ENCODE measurements at regions of chr15 and their contacts with region 1.

Region 1: DNA sequence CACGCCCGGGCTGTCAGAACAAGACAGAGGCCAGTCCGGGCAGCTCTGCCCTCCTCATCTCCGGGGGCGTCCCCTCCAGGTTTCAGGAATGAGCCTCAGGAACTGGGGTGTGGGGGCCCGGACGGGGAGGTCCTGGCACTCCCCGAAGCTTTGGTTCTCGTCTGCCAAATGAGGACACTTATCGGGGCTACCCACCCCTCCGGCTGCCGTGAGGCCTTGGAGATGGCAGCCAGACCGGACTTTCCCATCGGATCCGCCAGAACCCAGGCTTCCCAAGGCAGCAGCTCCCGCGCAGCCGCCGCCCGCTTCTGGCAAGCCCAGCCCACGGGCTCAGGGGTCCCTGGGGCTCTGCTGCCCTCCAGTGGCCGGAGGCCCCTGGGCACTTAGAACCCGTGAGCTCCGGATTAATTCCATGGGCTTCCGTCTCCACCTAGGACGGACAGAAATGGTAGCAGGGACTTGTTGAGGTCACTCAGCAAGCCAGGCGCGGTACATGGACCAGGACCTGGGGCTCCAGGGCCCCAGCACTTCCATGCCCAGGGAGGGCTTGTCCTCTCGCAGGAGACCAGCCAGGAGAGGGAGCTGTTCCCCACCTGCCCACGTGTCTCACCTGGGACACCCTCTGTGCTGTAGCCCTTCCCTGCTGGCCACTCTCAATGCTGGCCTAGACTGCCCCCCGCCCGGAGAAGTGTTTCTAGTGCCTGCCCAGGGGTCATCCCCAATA is 89.4 kb downstream of the LINGO1 start:
- DNase-seq: peak; percentile 87
- H3K4me3 ChIP-seq: peak overlapping the region; percentile 30 to 58 (median 46)
- H3K27ac ChIP-seq: peak overlapping the region; percentile 19 to 42 (median 34)
- H3K4me1 ChIP-seq: peaks cover 6 to 22% (median 10%) of the 10 kb centered on the region in 4 donors
- H3K27me3 ChIP-seq: no peaks in the 10 kb centered on the region
- CTCF ChIP-seq: peak; percentile 96 to 99 (median 97)
- EP300 ChIP-seq: no peak
- POLR2A ChIP-seq: no peak

Region 2: GRCh38 chr15:77024271-77025082 is 518.8 kb before region 1 on chr15:
- in situ Hi-C with region 1: no loop called
- intact Hi-C with region 1: loop called (anchors 2 kb)
- DNase-seq: peak; percentile 72
- H3K4me3 ChIP-seq: no peak overlapping the region
- H3K27ac ChIP-seq: no peak overlapping the region
- H3K4me1 ChIP-seq: peaks cover 0 to 15% (median 14%) of the 10 kb centered on the region in 4 donors
- H3K27me3 ChIP-seq: peaks cover 6% of the 10 kb centered on the region
- CTCF ChIP-seq: peak; percentile 93 to 98 (median 96)
- EP300 ChIP-seq: no peak
- POLR2A ChIP-seq: no peak

Region 3: GRCh38 chr15:77107531-77108355 is 435.6 kb before region 1 on chr15:
- in situ Hi-C with region 1: no loop called
- intact Hi-C with region 1: loop called (anchors 5 kb)
- DNase-seq: peak; percentile 62
- H3K4me3 ChIP-seq: no peak overlapping the region
- H3K27ac ChIP-seq: no peak overlapping the region
- H3K4me1 ChIP-seq: no peaks in the 10 kb centered on the region
- H3K27me3 ChIP-seq: no peaks in the 10 kb centered on the region
- CTCF ChIP-seq: peak; percentile 53 to 68 (median 56)
- EP300 ChIP-seq: no peak
- POLR2A ChIP-seq: no peak

Region 4: GRCh38 chr15:77118882-77119321 is 424.4 kb before region 1 on chr15:
- in situ Hi-C with region 1: no loop called
- intact Hi-C with region 1: loop called (anchors 5 kb)
- DNase-seq: peak; percentile 38
- H3K4me3 ChIP-seq: no peak overlapping the region
- H3K27ac ChIP-seq: no peak overlapping the region
- H3K4me1 ChIP-seq: peaks cover 0 to 30% (median 13%) of the 10 kb centered on the region in 4 donors
- H3K27me3 ChIP-seq: no peaks in the 10 kb centered on the region
- CTCF ChIP-seq: peak; percentile 61 to 75 (median 68)
- EP300 ChIP-seq: no peak
- POLR2A ChIP-seq: no peak